Activated B cell treated with CpG ODN at 0.5 μM for 24 hours (primary cell): ENCODE measurements at regions of chr12 and their contacts with region 1.

Region 1: GRCh38 chr12:69639400-69640016 is 28.8 kb upstream of the LRRC10 start:
- DNase-seq: peak; percentile 37
- ATAC-seq: peak; percentile 77
- H3K4me3 Mint-ChIP-seq: no peak overlapping the region
- H3K27ac Mint-ChIP-seq: no peak overlapping the region
- H3K4me1 Mint-ChIP-seq: no peaks in the 10 kb centered on the region
- H3K27me3 Mint-ChIP-seq: no peaks in the 10 kb centered on the region
- CTCF ChIP-seq: peak; percentile 77

Region 2: GRCh38 chr12:69290545-69291277 is 348.8 kb before region 1 on chr12:
- CTCF ChIA-PET with region 1: interaction called, 9 read pairs
- POLR2A ChIA-PET with region 1: no interaction called
- intact Hi-C with region 1: loop called (anchors 1 kb)
- DNase-seq: peak; percentile 56
- ATAC-seq: peak; percentile 100
- H3K4me3 Mint-ChIP-seq: no peak overlapping the region
- H3K27ac Mint-ChIP-seq: no peak overlapping the region
- H3K4me1 Mint-ChIP-seq: peaks cover 2% of the 10 kb centered on the region
- H3K27me3 Mint-ChIP-seq: peaks cover 45% of the 10 kb centered on the region
- CTCF ChIP-seq: peak; percentile 99

Region 3: DNA sequence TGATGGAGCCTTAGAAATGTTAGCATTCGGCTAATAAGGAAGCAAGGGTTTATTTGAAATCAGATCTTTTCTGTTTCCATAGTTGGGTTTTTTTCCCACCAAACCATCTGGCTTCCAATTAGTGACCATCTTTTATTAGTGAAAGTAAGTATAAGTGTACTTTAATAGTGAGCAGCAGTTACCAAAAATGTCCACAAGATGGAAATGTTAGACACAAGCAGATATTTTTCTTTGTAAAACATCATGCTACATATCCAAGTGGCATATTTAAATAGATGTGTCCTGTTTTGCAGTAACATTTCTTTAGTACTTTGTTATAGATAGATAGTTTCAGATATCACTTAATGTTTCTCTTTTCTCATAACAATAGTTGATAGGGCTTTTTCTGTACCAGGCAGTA is 251.1 kb before region 1 on chr12:
- CTCF ChIA-PET with region 1: no interaction called
- POLR2A ChIA-PET with region 1: no interaction called
- intact Hi-C with region 1: loop called (anchors 1 kb)
- DNase-seq: no peak
- ATAC-seq: no peak
- H3K4me3 Mint-ChIP-seq: no peak overlapping the region
- H3K27ac Mint-ChIP-seq: no peak overlapping the region
- H3K4me1 Mint-ChIP-seq: no peaks in the 10 kb centered on the region
- H3K27me3 Mint-ChIP-seq: no peaks in the 10 kb centered on the region
- CTCF ChIP-seq: no peak

Region 4: DNA sequence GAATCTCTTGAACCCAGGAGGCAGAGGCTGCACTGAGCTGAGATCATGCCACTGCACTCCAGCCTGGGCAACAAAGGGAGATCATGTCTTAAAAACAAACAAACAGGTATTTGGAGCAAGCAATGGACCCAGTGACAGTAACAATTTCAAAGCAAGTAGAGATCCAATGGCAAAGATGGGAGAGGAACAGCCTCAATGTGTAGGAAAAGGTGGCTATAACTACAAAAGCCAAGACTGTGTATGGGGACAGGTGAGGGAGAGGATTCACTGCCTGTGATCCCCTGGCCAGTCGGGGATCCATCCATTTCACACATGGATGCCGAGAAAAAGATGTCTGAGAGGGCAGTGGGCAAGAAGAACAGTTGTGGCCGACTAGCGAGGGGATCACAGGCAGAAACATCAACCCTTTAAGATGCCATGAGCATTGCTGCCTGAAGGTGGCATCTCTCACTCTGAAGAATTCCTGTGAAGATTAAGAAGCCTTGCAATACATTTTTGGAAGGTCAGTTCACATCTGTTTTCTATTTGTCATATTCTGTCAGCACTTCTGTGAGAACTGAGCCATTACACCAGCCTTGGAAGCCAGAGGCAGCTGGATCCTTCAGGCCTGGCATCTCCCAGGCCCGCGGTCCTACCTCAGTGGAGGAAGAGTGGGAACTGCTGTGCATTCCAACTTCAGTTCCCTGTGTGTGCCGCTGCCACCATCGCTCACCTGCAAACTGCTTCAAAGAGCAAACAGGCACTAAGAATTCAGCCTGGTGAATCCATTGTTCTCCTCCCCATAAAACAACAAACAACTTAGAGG is 223.8 kb before region 1 on chr12:
- CTCF ChIA-PET with region 1: no interaction called
- POLR2A ChIA-PET with region 1: no interaction called
- intact Hi-C with region 1: loop called (anchors 1 kb)
- DNase-seq: no peak
- ATAC-seq: no peak
- H3K4me3 Mint-ChIP-seq: no peak overlapping the region
- H3K27ac Mint-ChIP-seq: no peak overlapping the region
- H3K4me1 Mint-ChIP-seq: no peaks in the 10 kb centered on the region
- H3K27me3 Mint-ChIP-seq: no peaks in the 10 kb centered on the region
- CTCF ChIP-seq: no peak

Region 5: GRCh38 chr12:69484428-69484827 is 155.1 kb before region 1 on chr12:
- CTCF ChIA-PET with region 1: no interaction called
- POLR2A ChIA-PET with region 1: no interaction called
- intact Hi-C with region 1: no loop called
- DNase-seq: no peak
- ATAC-seq: no peak
- H3K4me3 Mint-ChIP-seq: no peak overlapping the region
- H3K27ac Mint-ChIP-seq: peak overlapping the region; percentile 10
- H3K4me1 Mint-ChIP-seq: peaks cover 37% of the 10 kb centered on the region
- H3K27me3 Mint-ChIP-seq: no peaks in the 10 kb centered on the region
- CTCF ChIP-seq: no peak

Region 6: GRCh38 chr12:69719382-69720316 is 80.1 kb after region 1 on chr12:
- CTCF ChIA-PET with region 1: no interaction called
- POLR2A ChIA-PET with region 1: no interaction called
- intact Hi-C with region 1: no loop called
- DNase-seq: no peak
- ATAC-seq: no peak
- H3K4me3 Mint-ChIP-seq: no peak overlapping the region
- H3K27ac Mint-ChIP-seq: no peak overlapping the region
- H3K4me1 Mint-ChIP-seq: no peaks in the 10 kb centered on the region
- H3K27me3 Mint-ChIP-seq: peaks cover 17% of the 10 kb centered on the region
- CTCF ChIP-seq: no peak

Region 7: DNA sequence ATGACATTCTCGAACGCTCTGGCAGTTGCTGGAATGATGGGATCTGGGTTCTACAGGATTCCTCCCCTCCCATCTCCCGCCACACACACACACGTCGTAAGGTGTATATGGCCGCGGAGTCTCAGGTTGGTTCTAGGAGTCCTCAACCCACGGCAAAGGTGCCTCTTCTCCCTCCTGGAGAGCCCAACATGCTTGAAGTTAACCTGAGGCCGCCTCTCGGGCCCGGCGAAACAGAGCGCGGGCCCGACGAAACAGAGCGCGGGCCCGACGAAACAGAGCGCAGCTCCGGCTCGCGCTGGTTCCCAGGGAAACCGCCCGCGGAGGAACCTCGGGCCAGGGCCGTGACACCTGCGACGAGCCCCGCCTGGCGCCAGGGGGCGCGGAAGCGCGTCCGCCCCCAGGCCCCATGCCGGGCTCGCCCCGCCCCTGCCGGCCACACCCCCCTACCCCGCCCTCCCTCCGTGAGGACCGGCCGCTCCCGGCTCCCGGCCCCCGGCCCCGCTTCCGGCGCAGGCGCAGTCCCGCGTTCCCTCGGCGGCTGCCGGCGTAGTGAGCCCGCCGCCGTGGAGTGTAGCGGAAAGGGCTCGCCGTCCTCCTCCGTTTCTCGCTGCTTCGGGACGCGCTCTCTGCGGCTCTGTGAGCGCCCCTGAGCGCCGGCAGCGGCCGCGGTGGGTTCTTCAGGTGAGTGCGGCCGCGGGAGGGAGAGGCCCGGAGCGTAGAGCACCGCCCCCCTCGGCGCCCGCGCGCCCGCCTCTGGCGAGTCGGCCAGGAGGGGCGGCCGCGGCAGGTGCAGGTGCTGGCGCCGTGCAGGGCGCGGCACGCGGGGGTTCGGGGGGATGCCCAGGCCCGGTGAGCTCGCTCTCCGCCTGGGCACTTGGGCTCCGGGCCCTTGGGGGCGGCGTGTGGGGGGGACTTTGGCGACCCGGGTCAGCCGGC is 99.1 kb after region 1 on chr12 and contains the start of gene RAB3IP:
- CTCF ChIA-PET with region 1: no interaction called
- POLR2A ChIA-PET with region 1: no interaction called
- intact Hi-C with region 1: no loop called
- DNase-seq: peak; percentile 93
- ATAC-seq: peak; percentile 90
- H3K4me3 Mint-ChIP-seq: peak within 1 kb of the TSS; percentile 85
- H3K27ac Mint-ChIP-seq: peak within 1 kb of the TSS; percentile 73
- H3K4me1 Mint-ChIP-seq: peaks cover 19% of the 10 kb centered on the region
- H3K27me3 Mint-ChIP-seq: peaks cover 4% of the 10 kb centered on the region
- CTCF ChIP-seq: no peak
- total RNA-seq, gene RAB3IP: 34.6 and 37.9 TPM in 2 replicates

Region 8: DNA sequence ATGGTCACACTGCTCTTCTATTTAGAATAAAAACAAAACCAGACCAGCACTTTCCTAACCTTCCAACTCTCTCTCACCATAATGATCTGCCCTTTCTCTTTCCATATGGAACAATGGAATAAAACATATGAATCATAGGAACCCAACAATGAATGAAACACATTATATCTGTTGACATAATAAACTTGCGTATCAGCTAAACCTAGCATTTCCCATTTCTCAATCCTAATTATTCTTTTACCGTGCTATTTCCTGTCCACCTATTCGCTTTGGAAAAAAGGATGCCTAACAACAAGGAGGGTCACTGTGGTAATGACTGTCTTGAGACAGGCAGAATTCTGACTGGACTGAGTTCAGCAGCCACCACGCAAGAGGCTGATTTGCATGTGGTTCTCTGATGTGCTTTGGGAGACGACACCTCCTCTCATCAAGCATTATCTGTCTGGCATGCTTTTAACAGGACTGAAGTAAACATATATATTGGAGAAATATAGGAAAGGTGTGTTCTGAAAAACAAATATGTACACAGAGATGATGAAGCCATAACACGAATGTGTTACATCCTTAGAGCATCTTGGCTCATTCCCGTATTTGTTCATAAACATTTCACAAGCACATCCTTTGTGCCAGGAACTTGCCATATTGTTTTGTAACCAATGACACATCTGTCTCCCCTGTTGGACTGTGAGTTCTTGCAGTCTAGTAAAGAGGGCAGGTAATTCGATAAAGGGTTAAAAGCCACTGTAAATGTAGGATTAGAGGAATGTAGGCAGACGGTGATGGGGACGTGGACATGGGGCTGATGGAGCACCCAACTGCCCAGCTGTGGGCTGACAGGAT is 910.1 kb after region 1 on chr12:
- CTCF ChIA-PET with region 1: no interaction called
- POLR2A ChIA-PET with region 1: no interaction called
- intact Hi-C with region 1: no loop called
- DNase-seq: no peak
- ATAC-seq: no peak
- H3K4me3 Mint-ChIP-seq: no peak overlapping the region
- H3K27ac Mint-ChIP-seq: no peak overlapping the region
- H3K4me1 Mint-ChIP-seq: no peaks in the 10 kb centered on the region
- H3K27me3 Mint-ChIP-seq: no peaks in the 10 kb centered on the region
- CTCF ChIP-seq: no peak